ENCODE measurements at regions of chr7 and their contacts with region 1.

Region 1: DNA sequence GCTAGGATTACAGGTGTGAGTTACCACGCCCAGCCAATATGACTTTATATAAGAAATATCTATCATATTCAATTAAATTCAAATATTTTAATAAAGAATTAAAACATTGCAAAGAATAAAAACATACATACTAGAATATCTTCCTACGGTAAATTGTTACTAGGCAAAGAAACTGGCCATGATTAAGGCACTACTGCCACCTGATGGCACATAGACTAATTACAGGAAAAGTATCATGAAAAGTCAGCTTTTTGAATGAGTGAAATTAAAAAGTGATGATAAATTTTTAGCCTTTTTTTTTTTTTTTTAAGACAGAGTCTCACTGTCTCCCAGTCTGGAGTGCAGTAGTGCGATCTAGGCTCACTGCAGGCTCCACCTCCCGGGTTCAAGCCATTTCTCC is 30.9 kb downstream of the MRPS33 start:
- DNase-seq: no peak
- ATAC-seq: no peak
- H3K4me3 Mint-ChIP-seq: no peak overlapping the region
- H3K27ac Mint-ChIP-seq: no peak overlapping the region
- H3K4me1 Mint-ChIP-seq: no peaks in the 10 kb centered on the region
- H3K27me3 Mint-ChIP-seq: no peaks in the 10 kb centered on the region
- CTCF ChIP-seq: peak; percentile 52

Region 2: GRCh38 chr7:140673063-140673773 is 310.6 kb before region 1 on chr7:
- CTCF ChIA-PET with region 1: interaction called, 10 read pairs
- POLR2A ChIA-PET with region 1: no interaction called
- DNase-seq: peak; percentile 61
- ATAC-seq: peak; percentile 73
- H3K4me3 Mint-ChIP-seq: peak overlapping the region; percentile 76
- H3K27ac Mint-ChIP-seq: no peak overlapping the region
- H3K4me1 Mint-ChIP-seq: peaks cover 11% of the 10 kb centered on the region
- H3K27me3 Mint-ChIP-seq: 0 out of 2 replicates have a peak, but pooled peaks cover 2% of the 10 kb centered on the region
- CTCF ChIP-seq: no peak

Region 3: GRCh38 chr7:140726281-140726680 is 257.5 kb before region 1 on chr7:
- CTCF ChIA-PET with region 1: interaction called, 15 read pairs
- POLR2A ChIA-PET with region 1: no interaction called
- DNase-seq: no peak
- ATAC-seq: no peak
- H3K4me3 Mint-ChIP-seq: no peak overlapping the region
- H3K27ac Mint-ChIP-seq: peak overlapping the region; percentile 12; the same call in 1 of the 2 replicates
- H3K4me1 Mint-ChIP-seq: no peaks in the 10 kb centered on the region
- H3K27me3 Mint-ChIP-seq: no peaks in the 10 kb centered on the region
- CTCF ChIP-seq: no peak

Region 4: GRCh38 chr7:140810830-140811556 is 172.8 kb before region 1 on chr7:
- CTCF ChIA-PET with region 1: interaction called, 33 read pairs
- POLR2A ChIA-PET with region 1: no interaction called
- DNase-seq: peak; percentile 52
- ATAC-seq: peak; percentile 94
- H3K4me3 Mint-ChIP-seq: no peak overlapping the region
- H3K27ac Mint-ChIP-seq: no peak overlapping the region
- H3K4me1 Mint-ChIP-seq: no peaks in the 10 kb centered on the region; the same call in 1 of the 2 replicates
- H3K27me3 Mint-ChIP-seq: no peaks in the 10 kb centered on the region
- CTCF ChIP-seq: peak; percentile 25

Region 5: GRCh38 chr7:140841166-140841715 is 142.6 kb before region 1 on chr7:
- CTCF ChIA-PET with region 1: no interaction called
- POLR2A ChIA-PET with region 1: no interaction called
- DNase-seq: no peak
- ATAC-seq: no peak
- H3K4me3 Mint-ChIP-seq: no peak overlapping the region
- H3K27ac Mint-ChIP-seq: no peak overlapping the region
- H3K4me1 Mint-ChIP-seq: no peaks in the 10 kb centered on the region
- H3K27me3 Mint-ChIP-seq: no peaks in the 10 kb centered on the region
- CTCF ChIP-seq: no peak

Region 6: GRCh38 chr7:140966561-140967226 is 17.1 kb before region 1 on chr7:
- CTCF ChIA-PET with region 1: no interaction called
- POLR2A ChIA-PET with region 1: no interaction called
- DNase-seq: no peak
- ATAC-seq: no peak
- H3K4me3 Mint-ChIP-seq: no peak overlapping the region
- H3K27ac Mint-ChIP-seq: no peak overlapping the region
- H3K4me1 Mint-ChIP-seq: no peaks in the 10 kb centered on the region
- H3K27me3 Mint-ChIP-seq: no peaks in the 10 kb centered on the region
- CTCF ChIP-seq: no peak